ENCODE measurements at regions of chr20 and their contacts with region 1.

Region 1: GRCh38 chr20:2538931-2539720 is 2.8 kb downstream of the TMC2 start:
- DNase-seq: no peak
- ATAC-seq: no peak
- H3K4me3 ChIP-seq: no peak overlapping the region
- H3K27ac ChIP-seq: no peak overlapping the region
- H3K4me1 ChIP-seq: no peaks in the 10 kb centered on the region
- H3K27me3 ChIP-seq: peaks cover 87% of the 10 kb centered on the region
- CTCF ChIP-seq: no peak

Region 2: DNA sequence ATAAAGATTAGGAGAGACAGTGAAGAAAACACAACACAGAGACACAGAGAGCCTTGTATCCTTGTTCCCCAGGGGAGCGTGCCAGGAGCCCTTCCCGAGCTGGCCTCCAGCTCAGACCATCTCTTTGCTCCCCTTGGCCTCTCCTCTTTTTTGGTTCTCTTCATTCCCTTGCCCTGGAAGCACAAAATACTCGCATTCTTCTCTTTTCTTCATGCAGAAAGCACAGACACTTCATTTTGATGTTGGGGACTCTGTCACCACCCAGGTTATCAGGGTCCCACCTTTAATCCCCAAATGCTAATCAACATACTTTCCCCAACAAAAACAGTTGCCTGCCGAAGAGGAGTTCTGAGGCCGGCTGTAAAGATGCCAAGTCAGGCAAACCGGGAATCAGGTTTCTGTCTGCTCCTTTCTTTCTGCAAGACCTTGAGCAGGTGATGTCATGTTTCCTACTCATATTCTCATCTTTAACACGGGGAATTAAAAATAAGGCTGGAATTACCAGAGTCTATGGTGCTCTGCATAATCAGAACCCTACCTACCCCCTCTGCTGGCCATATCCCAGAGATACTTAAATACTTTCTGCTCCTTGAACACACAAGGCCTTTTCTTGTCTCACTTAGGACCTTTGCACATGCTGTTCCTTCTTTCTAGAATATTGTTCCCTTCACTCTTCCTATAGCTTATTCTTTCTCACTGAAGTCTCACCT is 136.7 kb before region 1 on chr20:
- CTCF ChIA-PET with region 1: no interaction called
- POLR2A ChIA-PET with region 1: no interaction called
- intact Hi-C with region 1: no loop called
- DNase-seq: peak; percentile 66
- ATAC-seq: peak; percentile 78
- H3K4me3 ChIP-seq: no peak overlapping the region
- H3K27ac ChIP-seq: no peak overlapping the region
- H3K4me1 ChIP-seq: no peaks in the 10 kb centered on the region
- H3K27me3 ChIP-seq: 0 out of 2 replicates have a peak, but pooled peaks cover 5% of the 10 kb centered on the region
- CTCF ChIP-seq: peak; percentile 74

Region 3: GRCh38 chr20:2558581-2559278 is 19.6 kb after region 1 on chr20:
- CTCF ChIA-PET with region 1: no interaction called
- POLR2A ChIA-PET with region 1: interaction called, 16 read pairs
- intact Hi-C with region 1: no loop called
- DNase-seq: no peak
- ATAC-seq: no peak
- H3K4me3 ChIP-seq: no peak overlapping the region
- H3K27ac ChIP-seq: no peak overlapping the region
- H3K4me1 ChIP-seq: no peaks in the 10 kb centered on the region
- H3K27me3 ChIP-seq: peaks cover 76% of the 10 kb centered on the region
- CTCF ChIP-seq: no peak

Measured in PC-3 (cell line).